Activated naive CD4-positive, alpha-beta T cell treated with anti-CD3 and anti-CD28 coated beads for 36 hours (primary cell): ENCODE measurements at regions of chr9 and their contacts with region 1.

Region 1: DNA sequence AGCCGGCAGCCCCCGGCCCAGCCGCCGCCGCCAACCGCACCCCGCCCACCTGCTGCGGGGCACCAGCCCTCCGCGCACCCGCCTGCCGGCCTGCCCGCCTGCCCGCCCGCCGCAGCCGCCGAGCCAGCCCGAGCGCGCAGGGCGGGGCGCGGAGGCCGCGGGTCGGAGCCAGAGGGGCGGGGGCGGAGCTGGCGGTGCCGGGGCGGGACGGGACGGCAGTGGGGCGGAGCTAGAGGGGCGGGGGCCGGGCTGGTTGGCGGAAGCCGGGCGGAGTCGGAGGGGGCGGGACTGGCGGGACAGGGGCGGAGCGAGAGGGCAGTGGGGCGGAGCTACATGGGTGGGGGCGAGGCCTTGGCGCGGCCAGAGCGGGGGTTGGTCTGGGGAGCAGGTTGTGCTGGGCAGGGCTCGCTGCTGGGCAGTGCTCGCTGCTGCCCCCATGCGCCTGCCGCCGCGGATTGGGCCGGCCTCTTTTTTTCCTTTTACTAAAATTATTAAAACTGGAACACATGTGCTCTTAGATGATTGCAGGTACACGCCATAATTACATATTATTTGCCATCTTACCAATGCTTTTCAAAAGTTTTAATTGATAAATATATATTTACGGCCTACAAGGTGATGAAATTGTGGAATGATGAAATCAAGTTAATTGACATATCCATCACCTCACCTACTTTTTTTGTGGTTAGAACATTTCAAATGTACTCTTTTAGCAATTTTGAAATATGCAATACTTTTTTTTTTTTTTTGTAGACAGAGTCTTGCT is at the start of gene SH3GLB2:
- DNase-seq: peak; percentile 95
- H3K4me3 Mint-ChIP-seq: peak within 1 kb of the TSS; percentile 84
- H3K27ac Mint-ChIP-seq: no peak within 1 kb of the TSS
- H3K4me1 Mint-ChIP-seq: peaks cover 13% of the 10 kb centered on the region
- H3K27me3 Mint-ChIP-seq: no peaks in the 10 kb centered on the region
- total RNA-seq, gene SH3GLB2: 38.0 to 38.2 TPM

Region 2: DNA sequence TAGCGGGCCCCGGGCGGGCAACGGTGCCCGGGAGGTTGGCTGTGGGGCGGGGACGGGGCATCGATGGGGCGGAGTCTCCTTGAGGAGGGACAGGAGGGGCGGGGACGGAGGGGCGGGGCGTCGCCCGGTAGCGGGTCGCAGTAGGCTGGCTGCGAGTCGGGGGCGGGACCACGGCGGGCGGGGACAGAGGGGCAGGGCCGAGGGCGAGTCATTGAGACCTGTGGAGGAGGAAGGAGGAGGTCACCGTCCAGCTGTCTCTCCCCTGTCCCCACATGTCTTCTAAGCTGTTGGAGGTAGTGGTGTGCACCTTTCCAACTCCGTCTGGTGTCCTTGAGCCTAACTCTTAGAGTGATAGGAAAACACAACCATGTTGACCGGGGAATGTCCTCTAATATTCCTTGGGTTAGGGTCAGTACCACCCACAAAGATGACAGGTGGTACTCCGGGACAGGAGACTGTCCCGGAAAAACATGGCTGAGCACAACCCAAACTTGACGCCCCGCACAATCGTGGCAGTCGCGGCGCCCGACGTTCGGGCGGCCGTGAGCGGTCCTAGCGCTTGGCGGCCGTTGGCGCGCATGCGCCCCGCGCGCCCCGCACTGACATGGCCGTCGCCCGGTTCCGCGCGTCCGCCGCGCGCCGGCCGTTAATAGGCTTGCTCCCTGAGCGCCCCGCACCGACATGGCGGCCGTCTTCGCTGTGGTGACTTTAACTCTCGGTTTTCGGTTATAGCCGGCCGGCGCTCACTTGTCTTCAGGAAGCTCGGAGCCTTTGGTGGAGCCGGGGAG is 82.6 kb after region 1 on chr9 and contains the starts of genes CRAT and PTPA:
- CTCF ChIA-PET with region 1: no interaction called
- intact Hi-C with region 1: loop called (anchors 2 kb)
- DNase-seq: peak; percentile 99
- H3K4me3 Mint-ChIP-seq: peak within 1 kb of the TSS; percentile 87
- H3K27ac Mint-ChIP-seq: peak within 1 kb of the TSS; percentile 93
- H3K4me1 Mint-ChIP-seq: peaks cover 38% of the 10 kb centered on the region
- H3K27me3 Mint-ChIP-seq: no peaks in the 10 kb centered on the region
- total RNA-seq, gene CRAT: 15.0 to 15.8 TPM
- total RNA-seq, gene PTPA: 83.0 to 94.5 TPM

Region 3: DNA sequence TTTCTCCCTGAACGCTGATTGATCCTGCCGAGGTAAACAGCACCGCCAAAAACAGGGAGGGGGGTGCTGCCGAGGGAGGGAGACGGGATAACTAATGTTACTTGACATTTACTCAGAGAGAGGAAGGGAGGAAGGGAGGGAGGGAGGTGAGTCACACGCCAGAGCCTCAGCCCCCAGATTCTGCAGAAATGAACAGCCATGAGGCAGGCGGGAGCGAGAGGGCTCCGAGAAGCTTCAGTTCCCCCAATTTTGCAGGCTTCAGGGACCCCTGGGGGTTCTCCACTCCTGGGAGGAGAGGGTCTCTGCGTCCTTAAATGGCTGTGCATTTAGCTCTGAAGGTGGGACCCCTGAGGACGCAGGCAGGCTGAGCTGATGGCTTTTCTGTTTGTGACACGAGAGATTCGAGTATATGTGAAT is 208.8 kb after region 1 on chr9:
- CTCF ChIA-PET with region 1: no interaction called
- intact Hi-C with region 1: no loop called
- DNase-seq: peak; percentile 83
- H3K4me3 Mint-ChIP-seq: peak overlapping the region; percentile 82
- H3K27ac Mint-ChIP-seq: peak overlapping the region; percentile 95
- H3K4me1 Mint-ChIP-seq: peaks cover 53% of the 10 kb centered on the region
- H3K27me3 Mint-ChIP-seq: no peaks in the 10 kb centered on the region